ENCODE measurements at regions of chr18 and their contacts with region 1.

Region 1: GRCh38 chr18:48475635-48476549 is 62.9 kb upstream of the CTIF start:
- DNase-seq: peak; percentile 16 to 84 (median 60)

Region 2: GRCh38 chr18:48538531-48539405 is 62.9 kb after region 1 on chr18 and contains the start of gene CTIF:
- intact Hi-C with region 1: loop called (anchors 5 kb)
- DNase-seq: peak; percentile 95 to 100 (median 98)

Region 3: GRCh38 chr18:48550101-48550729 is 74.3 kb after region 1 on chr18:
- intact Hi-C with region 1: no loop called
- DNase-seq: peak in 6 of 42 donors; percentile 14 to 61 (median 34)

Region 4: GRCh38 chr18:48663931-48664847 is 188.3 kb after region 1 on chr18:
- intact Hi-C with region 1: loop called (anchors 2 kb)
- DNase-seq: peak; percentile 56 to 95 (median 86)

Region 5: DNA sequence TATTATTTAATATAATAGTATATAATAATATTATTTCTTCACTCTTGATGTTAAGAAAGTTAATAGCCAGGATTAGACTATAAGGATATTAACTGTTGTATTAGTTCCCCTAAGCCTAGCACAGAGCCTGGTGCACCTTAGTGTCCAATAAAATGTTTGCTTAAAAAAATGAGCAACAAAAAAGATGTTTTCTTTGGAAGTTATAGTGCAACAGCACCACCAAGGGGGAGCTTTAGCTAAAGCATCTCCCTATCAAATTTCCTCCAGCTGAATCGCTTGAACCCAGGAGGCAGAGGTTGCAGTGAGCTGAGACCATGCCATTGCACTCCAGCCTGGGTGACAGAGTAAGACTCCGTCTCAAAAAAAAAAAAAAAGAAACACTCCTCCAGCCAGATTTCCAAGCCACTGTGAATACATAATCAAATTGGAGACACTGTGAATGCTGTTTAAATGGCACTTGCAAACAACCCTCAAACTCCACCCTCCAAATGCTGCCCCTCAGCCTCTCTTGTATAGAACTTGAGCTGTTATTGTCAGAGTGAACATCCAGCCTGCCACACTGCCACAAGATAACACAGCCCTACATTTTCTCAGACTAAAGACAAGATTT is 762.6 kb after region 1 on chr18:
- intact Hi-C with region 1: loop called (anchors 5 kb)
- DNase-seq: peak in 18 of 42 donors; percentile 8 to 70 (median 33)

Measured in head of caudate nucleus (tissue), 42 donors.